Activated CD4-positive, alpha-beta T cell treated with anti-CD3 and anti-CD28 coated beads, Interleukin-2, amount 10 ng/mL, durations not matched to agents 24 days and 14 days (primary cell): ENCODE measurements at regions of chr14 and their contacts with region 1.

Region 1: DNA sequence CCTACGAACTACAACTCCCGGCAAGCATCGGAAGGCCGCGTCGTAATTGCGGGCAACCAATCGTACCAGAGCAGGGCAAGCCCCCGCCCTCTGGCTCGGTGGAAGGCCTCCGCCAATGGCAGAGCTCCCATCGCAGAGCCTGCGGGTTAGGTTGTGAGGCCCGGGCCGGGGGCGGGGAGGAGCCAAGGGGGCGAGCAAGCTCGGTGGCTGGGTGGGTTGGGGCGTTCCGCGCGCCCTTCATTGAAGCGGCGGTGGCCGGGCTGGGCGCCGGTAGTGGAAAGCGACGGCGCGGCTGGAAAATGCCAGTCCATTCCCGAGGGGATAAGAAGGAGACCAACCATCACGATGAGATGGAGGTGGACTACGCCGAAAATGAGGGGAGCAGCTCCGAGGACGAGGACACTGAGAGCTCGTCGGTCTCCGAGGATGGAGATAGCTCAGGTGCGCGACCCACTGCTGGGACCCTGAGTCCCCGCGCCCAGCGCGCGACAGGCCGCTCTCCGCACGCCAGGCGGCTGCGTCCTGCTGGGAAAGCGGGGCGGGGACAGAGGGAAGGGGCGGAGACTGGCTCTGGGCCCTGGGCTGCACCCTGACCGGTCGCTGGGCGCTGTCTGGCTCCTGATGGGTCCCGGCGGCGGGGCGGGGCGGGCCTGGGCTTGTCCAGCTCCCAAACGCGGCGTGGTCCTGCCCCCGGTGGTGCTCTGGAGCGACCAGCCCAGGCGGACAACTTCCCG is at the start of gene BRMS1L:
- DNase-seq: peak; percentile 99
- H3K4me3 Mint-ChIP-seq: peak within 1 kb of the TSS; percentile 93
- H3K27ac Mint-ChIP-seq: peak within 1 kb of the TSS; percentile 93
- H3K4me1 Mint-ChIP-seq: peaks cover 25% of the 10 kb centered on the region
- H3K27me3 Mint-ChIP-seq: peaks cover 2% of the 10 kb centered on the region
- total RNA-seq, gene BRMS1L: 6.0 and 8.2 TPM in 2 replicates

Region 2: GRCh38 chr14:35046048-35046741 is 780.2 kb before region 1 on chr14 and contains the start of gene FAM177A1:
- intact Hi-C with region 1: loop called (anchors 5 kb)
- DNase-seq: peak; percentile 99
- H3K4me3 Mint-ChIP-seq: peak within 1 kb of the TSS; percentile 96
- H3K27ac Mint-ChIP-seq: peak within 1 kb of the TSS; percentile 99
- H3K4me1 Mint-ChIP-seq: peaks cover 28% of the 10 kb centered on the region
- H3K27me3 Mint-ChIP-seq: no peaks in the 10 kb centered on the region
- total RNA-seq, gene FAM177A1: 37.9 and 41.6 TPM in 2 replicates

Region 3: DNA sequence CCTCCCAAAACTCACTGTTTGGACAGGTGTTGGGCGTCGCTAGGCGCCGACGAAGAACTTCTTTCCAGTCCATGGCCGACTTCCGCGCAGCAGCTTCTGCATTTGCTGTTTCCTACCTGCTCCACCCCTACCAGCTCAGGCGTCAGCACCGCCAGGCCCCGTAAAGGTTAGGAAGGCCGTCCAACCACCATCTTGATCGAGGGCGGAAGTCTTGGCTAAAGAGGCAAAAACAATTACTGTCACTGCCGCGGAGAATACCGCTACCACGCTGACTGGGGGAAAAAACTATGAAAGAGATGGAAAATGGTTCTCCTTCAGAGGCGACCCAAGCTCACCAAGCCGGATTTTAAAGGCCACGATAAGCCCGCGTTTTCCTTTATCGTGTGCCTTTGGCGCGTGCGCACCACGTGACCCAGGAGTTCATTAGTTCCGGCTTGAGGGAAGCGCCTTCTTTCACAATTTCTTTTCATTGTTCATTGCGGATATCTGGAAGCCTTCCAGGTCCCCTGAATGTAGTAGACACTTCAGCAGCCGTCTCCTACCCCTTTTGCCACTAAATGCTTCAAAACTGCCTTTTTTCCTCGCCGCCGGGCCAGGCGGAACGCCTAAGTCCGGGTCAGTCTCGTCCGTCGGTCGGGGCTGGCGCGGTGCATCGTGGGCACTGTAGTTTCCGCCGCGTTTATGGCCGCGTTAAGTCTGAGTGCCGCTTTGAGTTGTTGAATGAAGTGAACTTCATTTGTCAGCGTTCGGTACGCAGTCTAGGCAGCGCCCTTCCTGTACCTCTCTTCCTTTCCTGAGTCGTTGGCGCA is 704.3 kb before region 1 on chr14 and contains the starts of genes PPP2R3C and PRORP:
- intact Hi-C with region 1: loop called (anchors 10 kb)
- DNase-seq: peak; percentile 97
- H3K4me3 Mint-ChIP-seq: peak within 1 kb of the TSS; percentile 82
- H3K27ac Mint-ChIP-seq: peak within 1 kb of the TSS; percentile 100
- H3K4me1 Mint-ChIP-seq: peaks cover 56% of the 10 kb centered on the region
- H3K27me3 Mint-ChIP-seq: no peaks in the 10 kb centered on the region
- total RNA-seq, gene PPP2R3C: 51.6 and 58.1 TPM in 2 replicates
- total RNA-seq, gene PRORP: 35.6 and 41.1 TPM in 2 replicates

Region 4: GRCh38 chr14:35789651-35790050 is 36.7 kb before region 1 on chr14:
- intact Hi-C with region 1: no loop called
- DNase-seq: no peak
- H3K4me3 Mint-ChIP-seq: no peak overlapping the region
- H3K27ac Mint-ChIP-seq: no peak overlapping the region
- H3K4me1 Mint-ChIP-seq: peaks cover 13% of the 10 kb centered on the region
- H3K27me3 Mint-ChIP-seq: no peaks in the 10 kb centered on the region

Region 5: DNA sequence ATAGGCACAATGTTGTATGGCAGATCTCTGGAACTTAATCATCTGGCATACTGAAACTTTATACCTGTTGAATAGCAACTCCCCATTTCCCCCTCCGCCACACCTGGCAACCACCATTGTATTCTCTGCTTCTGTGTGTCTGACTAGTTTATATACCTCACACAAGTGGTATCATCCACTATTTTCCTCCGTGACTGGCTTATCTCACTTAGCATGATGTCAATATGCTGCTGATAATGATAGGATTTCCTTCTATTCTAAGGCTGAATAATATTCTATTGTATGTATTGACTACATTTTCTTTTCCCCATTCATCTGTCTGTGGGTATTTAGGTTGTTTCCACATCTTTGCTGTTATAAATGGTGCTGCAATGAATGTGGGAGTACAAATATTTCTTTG is 21.3 kb after region 1 on chr14:
- intact Hi-C with region 1: no loop called
- DNase-seq: no peak
- H3K4me3 Mint-ChIP-seq: no peak overlapping the region
- H3K27ac Mint-ChIP-seq: no peak overlapping the region
- H3K4me1 Mint-ChIP-seq: no peaks in the 10 kb centered on the region
- H3K27me3 Mint-ChIP-seq: no peaks in the 10 kb centered on the region

Region 6: GRCh38 chr14:36320200-36320896 is 494.0 kb after region 1 on chr14 and contains the start of gene MBIP:
- intact Hi-C with region 1: loop called (anchors 2 kb)
- DNase-seq: peak; percentile 96
- H3K4me3 Mint-ChIP-seq: peak within 1 kb of the TSS; percentile 87
- H3K27ac Mint-ChIP-seq: peak within 1 kb of the TSS; percentile 93
- H3K4me1 Mint-ChIP-seq: peaks cover 15% of the 10 kb centered on the region
- H3K27me3 Mint-ChIP-seq: peaks cover 21% of the 10 kb centered on the region
- total RNA-seq, gene MBIP: 30.3 and 31.3 TPM in 2 replicates